Heart left ventricle (tissue), 16 donors: ENCODE measurements at regions of chrX and their contacts with region 1.

Region 1: GRCh38 chrX:65985922-65986588 is 53.8 kb downstream of the VSIG4 start:
- DNase-seq: peak in 2 of 5 donors; percentile 19 to 26
- ATAC-seq: peak; percentile 58 to 85 (median 82)
- H3K4me3 ChIP-seq: no peak overlapping the region
- H3K27ac ChIP-seq: no peak overlapping the region
- H3K4me1 ChIP-seq: peaks cover 0 to 24% (median 0%) of the 10 kb centered on the region in 12 donors
- H3K27me3 ChIP-seq: peaks cover 0 to 16% (median 0%) of the 10 kb centered on the region in 9 donors
- CTCF ChIP-seq: peak; percentile 38 to 68 (median 58)
- POLR2A ChIP-seq: no peak

Region 2: GRCh38 chrX:65581661-65582339 is 404.3 kb before region 1 on chrX:
- intact Hi-C with region 1: loop called (anchors 1 to 5 kb)
- DNase-seq: peak in 4 of 5 donors; percentile 29 to 50 (median 47)
- ATAC-seq: peak; percentile 61 to 89 (median 84)
- H3K4me3 ChIP-seq: no peak overlapping the region
- H3K27ac ChIP-seq: no peak overlapping the region
- H3K4me1 ChIP-seq: no peaks in the 10 kb centered on the region
- H3K27me3 ChIP-seq: peaks cover 0 to 38% (median 0%) of the 10 kb centered on the region in 9 donors
- CTCF ChIP-seq: peak; percentile 50 to 87 (median 72)
- POLR2A ChIP-seq: no peak

Region 3: DNA sequence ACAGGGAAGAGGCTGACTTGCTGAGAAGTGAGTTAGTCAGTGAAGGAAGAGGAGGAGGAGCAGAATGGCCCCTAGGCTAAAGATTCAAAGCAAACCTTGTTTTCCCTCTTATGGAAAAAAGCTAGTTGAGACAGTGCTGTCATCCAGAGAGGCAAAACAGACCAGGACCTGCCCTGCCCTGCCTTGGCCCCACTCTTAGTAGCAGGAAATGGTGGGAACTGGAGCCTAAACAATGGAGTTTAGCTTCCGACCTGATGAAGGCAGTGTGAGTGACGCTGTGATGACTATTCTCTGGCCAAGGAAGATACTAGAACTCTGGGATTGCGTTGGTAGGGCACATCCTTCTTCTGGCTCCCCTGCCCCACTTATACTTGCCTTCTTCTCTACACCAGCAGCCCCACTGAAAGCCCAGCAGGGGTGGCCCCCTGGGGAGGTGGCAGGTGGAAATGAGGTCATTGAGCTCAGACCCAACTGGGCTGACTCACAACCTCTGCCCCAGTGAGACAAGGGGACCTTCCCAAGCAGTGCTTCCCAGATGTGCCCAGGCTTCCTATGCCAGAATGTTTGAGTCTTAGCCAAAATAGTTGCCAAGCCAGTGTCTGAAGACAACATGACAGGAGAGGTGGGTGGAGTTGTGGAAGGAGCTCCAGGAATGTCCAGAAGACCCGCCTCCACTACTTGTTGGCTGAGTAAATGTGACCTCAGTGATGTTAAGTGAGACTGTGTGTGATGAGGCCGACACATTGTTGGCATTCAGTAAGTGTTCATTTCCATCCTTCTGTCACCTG is 279.8 kb before region 1 on chrX:
- intact Hi-C with region 1: loop called in 1 of 10 experiments (anchors 5 kb)
- DNase-seq: peak; percentile 45 to 79 (median 61)
- ATAC-seq: peak; percentile 84 to 92 (median 86)
- H3K4me3 ChIP-seq: no peak overlapping the region
- H3K27ac ChIP-seq: peak overlapping the region; percentile 61 to 85 (median 78)
- H3K4me1 ChIP-seq: peaks cover 0 to 82% (median 50%) of the 10 kb centered on the region in 12 donors
- H3K27me3 ChIP-seq: no peaks in the 10 kb centered on the region
- CTCF ChIP-seq: no peak
- POLR2A ChIP-seq: no peak

Region 4: GRCh38 chrX:65745992-65746391 is 240.1 kb before region 1 on chrX:
- intact Hi-C with region 1: loop called in 1 of 10 experiments (anchors 10 kb)
- DNase-seq: no peak
- ATAC-seq: no peak
- H3K4me3 ChIP-seq: no peak overlapping the region
- H3K27ac ChIP-seq: no peak overlapping the region
- H3K4me1 ChIP-seq: peaks cover 0 to 24% (median 2%) of the 10 kb centered on the region in 12 donors
- H3K27me3 ChIP-seq: peaks cover 0 to 5% (median 0%) of the 10 kb centered on the region in 9 donors
- CTCF ChIP-seq: no peak
- POLR2A ChIP-seq: no peak

Region 5: DNA sequence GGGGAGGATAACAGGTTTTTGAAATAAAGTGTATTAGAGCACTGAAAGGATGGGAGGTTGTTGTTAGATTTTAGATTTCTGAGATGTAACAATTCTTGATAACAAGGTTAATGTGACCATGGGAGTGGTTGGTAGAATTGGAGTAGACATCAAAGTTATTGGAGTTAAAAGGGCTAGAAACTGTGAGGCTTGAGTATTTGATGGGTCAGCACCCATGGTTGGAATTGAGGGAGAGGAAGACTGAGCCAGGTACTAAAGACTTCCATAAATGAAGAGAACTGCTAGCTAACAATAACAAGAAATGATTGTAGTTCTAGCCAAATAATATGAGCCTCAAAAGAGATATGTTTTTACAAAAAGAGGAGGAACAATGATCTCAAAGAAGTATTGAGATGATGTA is 276.8 kb after region 1 on chrX:
- intact Hi-C with region 1: no loop called
- DNase-seq: no peak
- ATAC-seq: no peak
- H3K4me3 ChIP-seq: no peak overlapping the region
- H3K27ac ChIP-seq: no peak overlapping the region
- H3K4me1 ChIP-seq: no peaks in the 10 kb centered on the region
- H3K27me3 ChIP-seq: peaks cover 0 to 13% (median 0%) of the 10 kb centered on the region in 9 donors
- CTCF ChIP-seq: no peak
- POLR2A ChIP-seq: no peak